GM12878 (cell line): ENCODE measurements at regions of chr1 and their contacts with region 1.

Region 1: DNA sequence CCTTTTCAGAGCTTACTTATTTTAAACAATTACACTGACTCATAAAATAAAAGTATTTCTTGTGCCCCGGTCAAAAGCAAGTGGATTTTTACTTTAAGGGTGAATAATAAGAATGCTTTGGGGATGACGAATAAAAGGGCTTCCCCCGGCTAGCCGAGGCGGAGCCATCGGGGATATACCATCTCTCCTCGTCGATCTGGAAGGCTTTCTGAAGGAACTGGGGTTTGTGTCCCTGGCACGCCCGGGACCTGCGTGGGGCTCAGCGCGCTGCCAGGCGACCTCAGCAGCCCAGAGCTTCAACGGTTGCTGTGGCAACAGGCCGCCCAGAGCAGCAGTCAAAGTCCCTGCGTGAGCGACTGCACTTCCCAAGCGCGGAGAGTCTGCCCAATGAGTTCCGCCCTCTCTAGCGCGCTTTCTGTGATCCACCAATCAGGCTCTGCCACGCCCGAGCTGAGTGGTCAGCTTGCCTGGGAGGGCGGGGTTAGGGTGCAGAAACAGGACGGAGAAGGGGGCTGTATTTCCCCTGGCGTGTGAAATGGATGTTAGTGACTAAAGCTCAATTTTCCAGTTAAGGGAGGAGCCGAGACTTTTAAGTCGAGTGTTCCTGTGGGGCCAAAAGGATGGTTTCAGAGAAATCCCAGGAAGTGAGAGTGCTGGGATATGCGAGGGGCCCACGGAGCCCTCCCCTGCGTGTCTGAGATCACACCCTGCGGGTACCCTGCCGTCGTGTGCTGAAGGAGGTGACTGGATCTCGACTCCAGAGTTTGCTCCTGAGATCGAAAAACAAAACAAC is 33.0 kb upstream of the MGST3 start:
- DNase-seq: peak; percentile 90
- ATAC-seq: peak; percentile 98
- H3K4me3 ChIP-seq: peak overlapping the region; percentile 70
- H3K27ac ChIP-seq: peak overlapping the region; percentile 71
- H3K4me1 ChIP-seq: peaks cover 14% of the 10 kb centered on the region
- H3K27me3 ChIP-seq: peaks cover 0 to 8% of the 10 kb centered on the region in 2 experiments; a peak in 1 of 4 replicates
- CTCF ChIP-seq: no peak
- EP300 ChIP-seq: no peak
- POLR2A ChIP-seq: peak; percentile 40; the same call in 1 of the 2 replicates
- RAD21 ChIP-seq: no peak

Region 2: DNA sequence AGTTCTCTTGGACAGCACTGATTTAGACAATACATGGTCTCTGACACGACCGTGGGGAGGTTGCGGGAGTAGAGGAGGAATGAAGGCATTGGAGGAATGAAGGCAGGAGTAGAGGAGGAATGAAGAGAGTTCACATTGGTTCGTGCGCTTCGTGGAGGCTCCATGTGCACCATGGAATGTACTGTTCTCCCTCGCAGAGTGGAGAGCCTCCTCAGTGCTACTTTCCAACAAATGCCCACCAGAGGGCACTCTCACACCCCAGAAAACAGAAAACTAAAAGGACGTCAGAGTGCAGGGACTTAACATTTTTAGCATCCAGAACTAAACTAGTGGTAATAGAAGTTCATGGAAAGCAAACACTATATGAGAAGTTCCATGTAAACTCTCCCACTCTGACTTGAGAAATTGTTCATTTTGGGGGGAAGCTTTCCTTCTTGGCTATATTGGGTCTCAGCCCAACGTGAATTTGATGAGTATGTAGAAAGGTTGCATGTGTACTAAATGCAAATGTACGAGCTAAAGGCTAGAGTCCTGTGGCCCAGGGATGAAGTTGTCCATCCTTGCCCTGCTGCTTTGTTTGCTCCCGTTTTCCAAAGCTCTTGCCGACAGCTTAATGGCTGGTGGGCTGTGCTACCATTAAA is 453.2 kb before region 1 on chr1:
- CTCF ChIA-PET with region 1: no interaction called
- POLR2A ChIA-PET with region 1: no interaction called
- RAD21 ChIA-PET with region 1: no interaction called
- SMC1A ChIA-PET with region 1: interaction called, 3 read pairs
- in situ Hi-C with region 1: no loop called
- intact Hi-C with region 1: loop called (anchors 5 kb)
- DNase-seq: no peak
- ATAC-seq: peak; percentile 94
- H3K4me3 ChIP-seq: no peak overlapping the region
- H3K27ac ChIP-seq: no peak overlapping the region
- H3K4me1 ChIP-seq: no peaks in the 10 kb centered on the region
- H3K27me3 ChIP-seq: no peaks in the 10 kb centered on the region; a peak in 1 of 4 replicates
- CTCF ChIP-seq: peak; percentile 73 to 82 (median 81)
- EP300 ChIP-seq: no peak
- POLR2A ChIP-seq: no peak
- RAD21 ChIP-seq: peak; percentile 49

Region 3: GRCh38 chr1:165288350-165289148 is 309.5 kb before region 1 on chr1:
- CTCF ChIA-PET with region 1: no interaction called
- POLR2A ChIA-PET with region 1: no interaction called
- RAD21 ChIA-PET with region 1: no interaction called
- SMC1A ChIA-PET with region 1: no interaction called
- in situ Hi-C with region 1: no loop called
- intact Hi-C with region 1: no loop called
- DNase-seq: no peak
- ATAC-seq: no peak
- H3K4me3 ChIP-seq: no peak overlapping the region
- H3K27ac ChIP-seq: no peak overlapping the region
- H3K4me1 ChIP-seq: no peaks in the 10 kb centered on the region
- H3K27me3 ChIP-seq: 0 out of 4 replicates have a peak, but pooled peaks cover 0 to 2% of the 10 kb centered on the region in 2 experiments
- CTCF ChIP-seq: no peak
- EP300 ChIP-seq: no peak
- POLR2A ChIP-seq: no peak
- RAD21 ChIP-seq: no peak

Region 4: GRCh38 chr1:165383067-165383466 is 215.0 kb before region 1 on chr1:
- CTCF ChIA-PET with region 1: interaction called, 17 read pairs
- POLR2A ChIA-PET with region 1: no interaction called
- RAD21 ChIA-PET with region 1: no interaction called
- SMC1A ChIA-PET with region 1: interaction called, 3 read pairs
- in situ Hi-C with region 1: no loop called
- intact Hi-C with region 1: no loop called
- DNase-seq: no peak
- ATAC-seq: no peak
- H3K4me3 ChIP-seq: no peak overlapping the region
- H3K27ac ChIP-seq: no peak overlapping the region
- H3K4me1 ChIP-seq: no peaks in the 10 kb centered on the region
- H3K27me3 ChIP-seq: peaks cover 0 to 6% of the 10 kb centered on the region in 2 experiments; a peak in 3 of 4 replicates
- CTCF ChIP-seq: no peak
- EP300 ChIP-seq: no peak
- POLR2A ChIP-seq: no peak
- RAD21 ChIP-seq: no peak

Region 5: DNA sequence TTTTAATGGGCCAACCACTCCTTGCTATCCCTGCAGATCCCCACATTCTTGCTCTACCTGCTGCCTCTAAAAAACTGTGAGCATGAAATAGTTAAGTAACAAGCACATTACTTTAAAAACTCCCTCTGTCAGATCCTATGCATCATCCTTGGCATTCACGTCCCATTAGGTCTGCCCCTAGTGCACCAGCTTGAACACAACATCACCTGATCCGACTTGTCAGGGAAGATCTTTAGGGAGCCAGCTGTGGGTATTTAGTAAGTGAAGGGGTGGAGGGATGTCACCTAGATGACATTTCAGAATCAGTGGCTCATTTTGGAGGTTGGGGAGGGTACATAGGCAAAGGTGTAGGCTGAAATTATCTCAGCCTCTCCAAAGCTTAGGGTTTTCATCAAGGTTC is 186.7 kb before region 1 on chr1:
- CTCF ChIA-PET with region 1: interaction called, 22 read pairs
- POLR2A ChIA-PET with region 1: no interaction called
- RAD21 ChIA-PET with region 1: no interaction called
- SMC1A ChIA-PET with region 1: interaction called, 6 read pairs
- in situ Hi-C with region 1: no loop called
- intact Hi-C with region 1: no loop called
- DNase-seq: no peak
- ATAC-seq: no peak
- H3K4me3 ChIP-seq: no peak overlapping the region
- H3K27ac ChIP-seq: no peak overlapping the region
- H3K4me1 ChIP-seq: no peaks in the 10 kb centered on the region
- H3K27me3 ChIP-seq: peaks cover 2 to 3% of the 10 kb centered on the region in 2 experiments; a peak in 2 of 4 replicates
- CTCF ChIP-seq: no peak
- EP300 ChIP-seq: no peak
- POLR2A ChIP-seq: no peak
- RAD21 ChIP-seq: no peak

Region 6: DNA sequence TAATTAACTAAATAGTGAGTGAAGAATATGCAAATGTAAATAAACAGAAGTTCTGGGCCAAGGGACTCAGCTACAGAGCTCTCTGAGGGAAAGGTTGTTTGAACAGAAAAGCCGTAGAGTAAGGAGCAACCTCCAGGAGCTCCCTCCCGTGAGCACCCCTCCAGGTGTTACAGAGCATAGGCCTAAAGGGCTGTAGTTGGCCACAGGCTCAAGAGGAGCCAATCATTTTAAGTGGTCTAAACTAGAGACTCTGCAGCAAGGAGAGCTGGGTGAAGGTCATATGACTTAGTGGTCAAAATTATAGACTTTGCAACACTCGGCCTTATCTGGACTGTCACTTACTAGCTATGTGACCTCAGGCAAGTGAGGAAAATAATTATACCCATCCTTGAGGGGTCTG is 134.1 kb before region 1 on chr1:
- CTCF ChIA-PET with region 1: no interaction called
- POLR2A ChIA-PET with region 1: no interaction called
- RAD21 ChIA-PET with region 1: no interaction called
- SMC1A ChIA-PET with region 1: no interaction called
- in situ Hi-C with region 1: no loop called
- intact Hi-C with region 1: no loop called
- DNase-seq: no peak
- ATAC-seq: no peak
- H3K4me3 ChIP-seq: no peak overlapping the region
- H3K27ac ChIP-seq: no peak overlapping the region
- H3K4me1 ChIP-seq: no peaks in the 10 kb centered on the region
- H3K27me3 ChIP-seq: peaks cover 2 to 5% of the 10 kb centered on the region in 2 experiments
- CTCF ChIP-seq: no peak
- EP300 ChIP-seq: no peak
- POLR2A ChIP-seq: no peak
- RAD21 ChIP-seq: no peak

Region 7: DNA sequence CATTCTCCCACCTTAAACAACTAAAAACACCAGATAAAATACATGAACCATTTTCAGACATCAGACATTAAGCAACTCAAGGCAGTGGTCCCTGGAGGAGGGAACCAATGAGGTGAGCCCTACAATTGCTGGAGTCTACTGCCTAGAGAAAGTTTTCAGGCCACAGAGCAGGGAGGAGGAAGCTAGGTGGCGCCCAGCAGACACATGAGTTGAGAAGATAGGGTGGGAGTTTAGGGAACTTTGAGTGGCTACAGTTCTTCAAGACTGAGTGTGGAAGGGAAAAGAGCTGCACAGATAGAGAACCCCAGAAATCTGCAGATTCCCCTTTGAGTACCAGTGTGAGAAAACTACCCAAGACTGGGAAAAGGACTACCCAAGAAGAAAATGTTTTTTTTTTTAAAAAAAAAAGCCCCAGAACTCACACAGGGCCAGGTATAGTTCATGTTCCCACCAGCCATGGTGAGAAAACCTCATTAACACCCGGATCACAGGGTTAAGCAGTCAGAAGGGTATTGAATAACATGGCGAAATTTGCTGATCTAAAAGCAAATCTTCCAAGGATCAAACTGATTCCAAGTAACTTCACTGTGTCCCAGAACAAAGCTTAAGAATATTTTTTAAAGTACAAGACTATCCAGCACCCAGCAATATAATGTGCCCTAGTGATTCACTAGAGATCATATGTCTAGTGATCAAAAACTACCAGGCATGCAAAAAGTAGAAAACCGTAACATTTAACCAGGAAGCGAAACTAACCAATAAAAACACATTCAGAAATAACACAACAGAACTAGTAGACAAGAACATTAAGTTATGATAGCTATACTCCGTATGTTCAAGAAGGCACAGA is 88.3 kb after region 1 on chr1:
- CTCF ChIA-PET with region 1: interaction called, 62 read pairs
- POLR2A ChIA-PET with region 1: interaction called, 3 read pairs
- RAD21 ChIA-PET with region 1: interaction called, 8 read pairs
- SMC1A ChIA-PET with region 1: interaction called, 18 read pairs
- in situ Hi-C with region 1: no loop called
- intact Hi-C with region 1: no loop called
- DNase-seq: peak; percentile 24
- ATAC-seq: peak; percentile 90
- H3K4me3 ChIP-seq: peak overlapping the region; percentile 21
- H3K27ac ChIP-seq: peak overlapping the region; percentile 77
- H3K4me1 ChIP-seq: peaks cover 10% of the 10 kb centered on the region
- H3K27me3 ChIP-seq: no peaks in the 10 kb centered on the region
- CTCF ChIP-seq: peak; percentile 25 to 44 (median 26); a peak in 3 of 6 replicates
- EP300 ChIP-seq: no peak
- POLR2A ChIP-seq: no peak
- RAD21 ChIP-seq: peak; percentile 32

Region 8: GRCh38 chr1:165768513-165769394 is 170.7 kb after region 1 on chr1 and contains the start of gene TMCO1:
- CTCF ChIA-PET with region 1: no interaction called
- POLR2A ChIA-PET with region 1: no interaction called
- RAD21 ChIA-PET with region 1: interaction called, 10 read pairs
- SMC1A ChIA-PET with region 1: interaction called, 6 read pairs
- in situ Hi-C with region 1: no loop called
- intact Hi-C with region 1: loop called (anchors 5 kb)
- DNase-seq: peak; percentile 93
- ATAC-seq: peak; percentile 98
- H3K4me3 ChIP-seq: peak within 1 kb of the TSS; percentile 79
- H3K27ac ChIP-seq: peak within 1 kb of the TSS; percentile 92
- H3K4me1 ChIP-seq: peaks cover 10% of the 10 kb centered on the region; the same call in 1 of the 2 replicates
- H3K27me3 ChIP-seq: no peaks in the 10 kb centered on the region
- CTCF ChIP-seq: peak in 2 of 3 experiments; percentile 15 to 16; a peak in 2 of 6 replicates
- EP300 ChIP-seq: no peak
- POLR2A ChIP-seq: peak; percentile 90
- RAD21 ChIP-seq: peak; percentile 35; the same call in 1 of the 2 replicates
- polyA plus RNA-seq, gene TMCO1: 184 to 253 TPM

Region 9: DNA sequence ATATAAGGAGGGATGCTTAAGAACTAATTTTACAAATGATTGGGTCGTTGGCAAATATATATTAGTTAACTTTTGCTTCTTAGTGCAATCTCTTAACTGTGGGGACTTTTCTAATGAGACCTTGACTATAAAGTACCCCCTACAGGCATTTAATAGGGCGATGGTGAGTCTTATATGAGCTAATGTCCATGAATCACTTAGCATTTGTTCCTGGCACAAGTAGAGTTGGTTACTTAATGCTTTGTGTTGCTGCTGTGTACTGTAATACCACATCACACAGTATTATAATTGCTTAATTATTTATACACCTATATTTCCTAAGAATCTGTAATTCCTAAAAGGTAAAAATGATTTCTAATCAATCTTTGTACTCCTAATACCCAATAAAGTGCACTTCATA is 195.9 kb after region 1 on chr1:
- CTCF ChIA-PET with region 1: no interaction called
- POLR2A ChIA-PET with region 1: no interaction called
- RAD21 ChIA-PET with region 1: no interaction called
- SMC1A ChIA-PET with region 1: no interaction called
- in situ Hi-C with region 1: no loop called
- intact Hi-C with region 1: no loop called
- DNase-seq: no peak
- ATAC-seq: no peak
- H3K4me3 ChIP-seq: no peak overlapping the region
- H3K27ac ChIP-seq: no peak overlapping the region
- H3K4me1 ChIP-seq: no peaks in the 10 kb centered on the region
- H3K27me3 ChIP-seq: no peaks in the 10 kb centered on the region; a peak in 1 of 4 replicates
- CTCF ChIP-seq: no peak
- EP300 ChIP-seq: no peak
- POLR2A ChIP-seq: no peak
- RAD21 ChIP-seq: no peak

Region 10: GRCh38 chr1:165928075-165928731 is 330.1 kb after region 1 on chr1:
- CTCF ChIA-PET with region 1: interaction called, 26 read pairs
- POLR2A ChIA-PET with region 1: no interaction called
- RAD21 ChIA-PET with region 1: interaction called, 3 read pairs
- SMC1A ChIA-PET with region 1: interaction called, 7 read pairs
- in situ Hi-C with region 1: no loop called
- intact Hi-C with region 1: no loop called
- DNase-seq: no peak
- ATAC-seq: peak; percentile 81
- H3K4me3 ChIP-seq: no peak overlapping the region
- H3K27ac ChIP-seq: no peak overlapping the region
- H3K4me1 ChIP-seq: no peaks in the 10 kb centered on the region; the same call in 1 of the 2 replicates
- H3K27me3 ChIP-seq: no peaks in the 10 kb centered on the region
- CTCF ChIP-seq: peak; percentile 71 to 78 (median 74)
- EP300 ChIP-seq: no peak
- POLR2A ChIP-seq: no peak
- RAD21 ChIP-seq: peak; percentile 87